ENCODE measurements at regions of chr5 and their contacts with region 1.

Region 1: DNA sequence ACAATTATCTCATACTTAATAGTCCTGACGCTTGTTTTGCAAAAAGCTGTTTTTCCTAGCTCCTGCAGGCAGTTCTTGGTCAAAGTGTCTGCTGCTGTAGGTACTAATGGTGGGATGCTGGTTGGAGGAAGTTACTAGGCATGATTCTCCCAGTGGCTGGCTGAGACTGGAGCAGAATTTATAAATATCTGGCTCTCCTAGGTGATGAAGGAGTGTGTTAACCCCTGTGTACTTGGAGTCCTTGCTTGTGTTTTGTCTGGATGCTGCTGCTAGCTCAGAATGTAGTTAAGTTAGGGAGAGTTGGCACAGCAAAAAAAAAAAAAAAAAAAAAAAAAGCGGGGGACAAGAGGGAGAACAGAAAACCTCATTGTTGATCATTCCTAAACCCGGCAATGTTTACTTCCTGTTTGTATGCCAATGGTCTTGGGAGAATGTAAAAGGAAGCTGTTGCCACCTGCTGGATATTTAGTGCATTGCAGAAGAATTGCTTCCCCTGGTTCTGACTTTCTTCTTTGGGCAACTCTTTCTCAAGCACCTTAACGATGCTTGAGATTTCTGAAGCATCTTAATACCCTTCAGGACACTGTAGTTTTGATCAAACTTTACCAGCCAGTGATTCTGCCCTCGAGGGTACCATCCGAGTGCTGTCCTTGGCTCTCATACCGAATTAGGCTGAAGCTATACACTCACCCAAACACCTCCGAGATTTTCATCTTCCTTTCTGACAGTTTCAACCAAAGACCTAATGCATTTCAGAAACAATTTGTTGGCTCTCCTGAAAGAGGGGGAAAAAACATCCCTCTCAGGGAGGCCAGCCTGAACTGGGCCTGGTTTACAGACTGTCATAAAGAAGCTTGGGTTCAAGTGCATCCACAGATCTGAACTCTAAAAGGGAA is 71.7 kb upstream of the WWC1 start:
- DNase-seq: peak; percentile 60
- H3K4me3 ChIP-seq: no peak overlapping the region
- H3K27ac ChIP-seq: no peak overlapping the region
- H3K4me1 ChIP-seq: no peaks in the 10 kb centered on the region
- H3K27me3 ChIP-seq: no peaks in the 10 kb centered on the region
- CTCF ChIP-seq: peak; percentile 85 to 93

Region 2: DNA sequence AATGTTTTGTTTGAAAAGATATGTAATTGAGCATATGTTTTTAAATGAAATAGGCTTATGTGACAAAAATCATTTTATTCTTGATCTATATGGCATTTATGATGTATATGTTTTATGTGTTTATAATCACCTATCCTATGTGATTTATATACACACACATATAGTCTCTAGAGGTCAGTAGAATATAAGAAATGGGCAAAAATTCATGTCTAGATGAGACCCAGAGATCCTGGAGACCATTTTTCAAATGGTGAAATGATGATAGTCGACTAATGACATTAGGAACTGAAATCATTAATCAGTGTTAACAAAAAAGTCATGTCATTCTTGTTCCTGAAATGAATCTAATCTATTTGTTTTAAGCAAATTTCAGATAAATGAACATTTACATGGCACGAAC is 637.5 kb before region 1 on chr5:
- CTCF ChIA-PET with region 1: no interaction called
- dilution Hi-C with region 1: no loop called
- in situ Hi-C with region 1: loop called (anchors 10 kb)
- intact Hi-C with region 1: loop called (anchors 1 kb)
- DNase-seq: peak; percentile 10
- H3K4me3 ChIP-seq: no peak overlapping the region
- H3K27ac ChIP-seq: no peak overlapping the region
- H3K4me1 ChIP-seq: no peaks in the 10 kb centered on the region
- H3K27me3 ChIP-seq: no peaks in the 10 kb centered on the region
- CTCF ChIP-seq: peak; percentile 29 to 41

Region 3: GRCh38 chr5:167699434-167699833 is 520.3 kb before region 1 on chr5:
- CTCF ChIA-PET with region 1: interaction called, 19 read pairs
- dilution Hi-C with region 1: no loop called
- in situ Hi-C with region 1: no loop called
- intact Hi-C with region 1: loop called (anchors 5 kb)
- DNase-seq: peak; percentile 99
- H3K4me3 ChIP-seq: no peak overlapping the region
- H3K27ac ChIP-seq: peak overlapping the region; percentile 100
- H3K4me1 ChIP-seq: peaks cover 34% of the 10 kb centered on the region
- H3K27me3 ChIP-seq: no peaks in the 10 kb centered on the region
- CTCF ChIP-seq: no peak

Region 4: GRCh38 chr5:168015506-168015905 is 204.3 kb before region 1 on chr5:
- CTCF ChIA-PET with region 1: interaction called, 32 read pairs
- dilution Hi-C with region 1: no loop called
- in situ Hi-C with region 1: no loop called
- intact Hi-C with region 1: no loop called
- DNase-seq: no peak
- H3K4me3 ChIP-seq: no peak overlapping the region
- H3K27ac ChIP-seq: no peak overlapping the region
- H3K4me1 ChIP-seq: no peaks in the 10 kb centered on the region
- H3K27me3 ChIP-seq: no peaks in the 10 kb centered on the region
- CTCF ChIP-seq: no peak

Region 5: GRCh38 chr5:168114444-168115017 is 105.2 kb before region 1 on chr5:
- CTCF ChIA-PET with region 1: interaction called, 3 read pairs
- dilution Hi-C with region 1: no loop called
- in situ Hi-C with region 1: no loop called
- intact Hi-C with region 1: loop called (anchors 1 kb)
- DNase-seq: peak; percentile 37
- H3K4me3 ChIP-seq: no peak overlapping the region
- H3K27ac ChIP-seq: no peak overlapping the region
- H3K4me1 ChIP-seq: no peaks in the 10 kb centered on the region
- H3K27me3 ChIP-seq: no peaks in the 10 kb centered on the region
- CTCF ChIP-seq: peak; percentile 66 to 92